ENCODE measurements at regions of chr1 and their contacts with region 1.

Region 1: DNA sequence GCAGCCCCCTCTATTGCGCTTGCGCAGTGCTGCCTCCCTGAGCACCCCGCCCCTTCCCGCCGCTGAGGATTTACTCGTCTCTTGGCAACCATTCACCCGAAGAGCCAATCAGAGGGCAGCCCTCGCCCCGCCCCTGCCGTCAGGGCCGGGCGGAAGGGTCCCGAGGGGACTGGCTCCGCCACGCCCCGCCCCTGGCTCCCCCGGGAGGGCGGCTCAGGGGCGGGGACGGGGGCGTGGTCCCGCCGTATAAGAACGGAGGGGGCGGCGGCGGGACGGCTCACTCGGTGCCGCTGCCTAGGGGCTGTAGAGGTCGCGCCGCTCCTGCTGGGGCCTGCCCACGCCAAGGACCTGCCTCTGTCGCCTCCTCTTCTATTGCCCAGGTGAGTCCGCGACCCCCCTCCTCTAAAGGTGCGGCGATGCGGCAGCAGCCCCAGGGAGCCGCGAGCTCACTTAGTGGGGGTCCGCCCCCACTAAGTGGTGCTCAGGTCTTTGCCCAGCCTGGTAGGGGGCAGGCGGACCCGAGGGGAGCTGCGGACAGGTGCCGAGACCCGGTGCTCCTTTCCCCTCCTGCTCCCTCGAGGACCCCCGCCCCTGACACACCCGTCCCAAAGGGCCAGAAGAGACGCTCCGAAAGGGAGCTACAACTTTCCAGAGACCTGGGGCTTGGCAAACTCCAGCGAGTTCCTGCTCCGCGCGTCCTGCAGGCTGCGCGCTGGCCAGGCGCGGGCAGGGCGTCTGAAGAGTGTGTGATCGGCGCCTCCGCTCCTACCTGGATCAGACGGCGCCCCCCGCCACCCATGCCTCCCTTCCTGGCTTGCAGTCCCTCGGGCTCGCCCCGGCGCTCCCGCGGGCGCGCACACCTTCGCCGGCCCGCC is at the start of gene TENT5C:
- DNase-seq: peak; percentile 98 to 99 (median 99)
- H3K4me3 ChIP-seq: peak within 1 kb of the TSS; percentile 93
- H3K4me3 Mint-ChIP-seq: peak within 1 kb of the TSS; percentile 91 to 99 (median 98)
- H3K27ac ChIP-seq: peak within 1 kb of the TSS; percentile 96
- H3K27ac Mint-ChIP-seq: peak within 1 kb of the TSS; percentile 96 to 100 (median 98)
- H3K4me1 ChIP-seq: peaks cover 36% of the 10 kb centered on the region
- H3K4me1 Mint-ChIP-seq: peaks cover 45 to 53% (median 51%) of the 10 kb centered on the region in 3 donors
- H3K27me3 ChIP-seq: no peaks in the 10 kb centered on the region
- H3K27me3 Mint-ChIP-seq: peaks cover 0 to 8% of the 10 kb centered on the region in 2 donors
- total RNA-seq, gene TENT5C: 3.7 to 4.1 TPM

Region 2: DNA sequence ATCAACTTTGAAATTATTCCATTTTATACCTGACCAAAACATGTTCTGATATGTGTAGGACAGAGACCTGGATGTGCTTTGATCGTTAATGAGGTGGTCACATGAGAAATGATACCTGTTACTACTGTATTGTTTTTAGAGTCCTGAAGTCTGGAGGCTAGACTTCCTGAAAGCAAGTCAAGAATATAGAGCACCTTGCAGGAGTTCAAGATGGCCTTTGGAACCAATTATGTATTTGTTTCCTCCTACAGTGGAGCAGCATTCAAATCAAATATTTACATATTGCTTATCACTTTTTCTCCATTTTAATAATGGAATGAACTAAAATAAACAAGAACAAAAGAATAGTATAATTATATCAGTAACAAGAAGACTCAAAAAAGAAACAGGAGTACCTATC is 82.9 kb before region 1 on chr1:
- CTCF ChIA-PET with region 1: no interaction called
- POLR2A ChIA-PET with region 1: no interaction called
- DNase-seq: no peak
- H3K4me3 ChIP-seq: no peak overlapping the region
- H3K4me3 Mint-ChIP-seq: no peak overlapping the region
- H3K27ac ChIP-seq: no peak overlapping the region
- H3K27ac Mint-ChIP-seq: no peak overlapping the region
- H3K4me1 ChIP-seq: no peaks in the 10 kb centered on the region
- H3K4me1 Mint-ChIP-seq: no peaks in the 10 kb centered on the region
- H3K27me3 ChIP-seq: no peaks in the 10 kb centered on the region
- H3K27me3 Mint-ChIP-seq: no peaks in the 10 kb centered on the region

Region 3: DNA sequence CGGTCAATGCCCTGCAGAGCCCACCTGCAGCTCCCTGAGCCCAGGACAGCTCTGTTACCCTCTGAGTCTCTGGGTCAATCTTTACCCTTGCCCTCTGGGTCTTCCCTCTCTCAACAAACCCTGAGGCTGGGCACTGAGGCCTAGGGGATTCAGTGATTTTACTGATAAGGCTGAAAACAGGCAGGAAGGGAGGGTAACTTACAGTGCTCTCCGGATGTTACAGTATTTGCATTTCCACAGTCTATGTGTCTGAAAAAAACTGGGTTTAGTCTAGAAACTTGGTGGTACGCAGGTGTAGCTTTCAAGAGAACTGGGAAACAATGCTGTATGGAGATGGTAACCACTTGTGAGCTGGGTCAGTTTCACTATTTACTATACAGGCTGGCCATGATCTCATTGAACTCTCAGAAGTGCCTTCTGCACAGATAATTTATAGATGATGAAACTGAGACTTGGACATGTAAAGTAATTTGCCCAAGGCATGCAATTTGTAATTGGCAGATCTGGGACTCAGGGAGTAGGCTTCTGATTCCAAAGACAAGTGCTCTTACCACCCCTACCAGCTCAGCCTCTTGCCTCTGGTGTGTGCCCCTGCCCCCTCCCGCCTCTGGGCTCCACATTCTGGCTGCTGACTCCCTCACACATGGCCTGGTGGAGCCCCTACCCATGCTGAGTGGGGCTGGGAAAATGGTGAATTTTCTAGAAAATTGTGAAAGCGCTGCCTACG is 48.6 kb after region 1 on chr1:
- CTCF ChIA-PET with region 1: interaction called, 29 read pairs
- POLR2A ChIA-PET with region 1: interaction called, 48 read pairs
- DNase-seq: peak in 1 of 5 donors; percentile 43
- H3K4me3 ChIP-seq: peak overlapping the region; percentile 3
- H3K4me3 Mint-ChIP-seq: peak overlapping the region; percentile 29 to 87 (median 73)
- H3K27ac ChIP-seq: peak overlapping the region; percentile 22
- H3K27ac Mint-ChIP-seq: peak overlapping the region; percentile 78 to 98 (median 97)
- H3K4me1 ChIP-seq: peaks cover 91% of the 10 kb centered on the region
- H3K4me1 Mint-ChIP-seq: peaks cover 86 to 93% (median 91%) of the 10 kb centered on the region in 3 donors
- H3K27me3 ChIP-seq: no peaks in the 10 kb centered on the region
- H3K27me3 Mint-ChIP-seq: peaks cover 0 to 4% of the 10 kb centered on the region in 2 donors

Region 4: GRCh38 chr1:117664314-117664713 is 58.3 kb after region 1 on chr1:
- CTCF ChIA-PET with region 1: interaction called, 21 read pairs
- POLR2A ChIA-PET with region 1: interaction called, 23 read pairs
- DNase-seq: peak in 4 of 5 donors; percentile 43 to 90 (median 84)
- H3K4me3 ChIP-seq: no peak overlapping the region
- H3K4me3 Mint-ChIP-seq: peak overlapping the region; percentile 12 to 75 (median 59)
- H3K27ac ChIP-seq: peak overlapping the region; percentile 62
- H3K27ac Mint-ChIP-seq: peak overlapping the region; percentile 91 to 99 (median 98)
- H3K4me1 ChIP-seq: peaks cover 62% of the 10 kb centered on the region
- H3K4me1 Mint-ChIP-seq: peaks cover 75 to 88% (median 83%) of the 10 kb centered on the region in 3 donors
- H3K27me3 ChIP-seq: no peaks in the 10 kb centered on the region
- H3K27me3 Mint-ChIP-seq: peaks cover 0 to 2% of the 10 kb centered on the region in 2 donors

Region 5: DNA sequence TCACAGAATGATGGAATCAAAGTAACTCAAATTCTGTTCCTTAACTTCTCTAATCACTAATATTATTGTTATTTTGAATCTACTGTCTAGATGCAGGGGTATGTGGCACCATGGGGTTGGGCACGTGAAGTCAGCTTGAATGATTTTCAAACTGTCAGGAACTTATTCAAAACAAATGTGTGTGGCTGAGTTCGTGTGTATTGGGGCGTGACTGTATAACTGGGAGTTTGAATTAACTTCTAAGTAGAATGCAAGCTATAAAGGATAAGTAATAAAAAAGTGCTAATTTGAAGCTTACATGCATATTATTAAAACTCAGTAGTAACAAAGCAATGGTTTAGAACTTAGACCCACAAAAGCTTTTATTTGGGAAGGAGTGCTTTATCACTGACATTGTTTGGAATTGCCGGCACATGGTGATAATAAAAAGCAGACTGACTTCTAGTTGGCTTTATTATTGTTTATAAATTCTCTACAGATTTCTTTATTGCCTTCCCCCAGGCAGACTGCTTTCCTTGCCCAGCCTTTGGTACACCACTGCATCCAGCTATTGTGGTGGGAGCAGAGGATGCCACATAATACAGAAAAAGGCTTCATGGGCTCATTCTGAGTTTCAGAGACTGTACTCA is 84.1 kb after region 1 on chr1:
- CTCF ChIA-PET with region 1: no interaction called
- POLR2A ChIA-PET with region 1: no interaction called
- DNase-seq: no peak
- H3K4me3 ChIP-seq: no peak overlapping the region
- H3K4me3 Mint-ChIP-seq: no peak overlapping the region
- H3K27ac ChIP-seq: no peak overlapping the region
- H3K27ac Mint-ChIP-seq: no peak overlapping the region
- H3K4me1 ChIP-seq: no peaks in the 10 kb centered on the region
- H3K4me1 Mint-ChIP-seq: no peaks in the 10 kb centered on the region
- H3K27me3 ChIP-seq: no peaks in the 10 kb centered on the region
- H3K27me3 Mint-ChIP-seq: peaks cover 8 to 18% of the 10 kb centered on the region in 2 donors